A549 (cell line): ENCODE measurements at regions of chr1 and their contacts with region 1.

Region 1: DNA sequence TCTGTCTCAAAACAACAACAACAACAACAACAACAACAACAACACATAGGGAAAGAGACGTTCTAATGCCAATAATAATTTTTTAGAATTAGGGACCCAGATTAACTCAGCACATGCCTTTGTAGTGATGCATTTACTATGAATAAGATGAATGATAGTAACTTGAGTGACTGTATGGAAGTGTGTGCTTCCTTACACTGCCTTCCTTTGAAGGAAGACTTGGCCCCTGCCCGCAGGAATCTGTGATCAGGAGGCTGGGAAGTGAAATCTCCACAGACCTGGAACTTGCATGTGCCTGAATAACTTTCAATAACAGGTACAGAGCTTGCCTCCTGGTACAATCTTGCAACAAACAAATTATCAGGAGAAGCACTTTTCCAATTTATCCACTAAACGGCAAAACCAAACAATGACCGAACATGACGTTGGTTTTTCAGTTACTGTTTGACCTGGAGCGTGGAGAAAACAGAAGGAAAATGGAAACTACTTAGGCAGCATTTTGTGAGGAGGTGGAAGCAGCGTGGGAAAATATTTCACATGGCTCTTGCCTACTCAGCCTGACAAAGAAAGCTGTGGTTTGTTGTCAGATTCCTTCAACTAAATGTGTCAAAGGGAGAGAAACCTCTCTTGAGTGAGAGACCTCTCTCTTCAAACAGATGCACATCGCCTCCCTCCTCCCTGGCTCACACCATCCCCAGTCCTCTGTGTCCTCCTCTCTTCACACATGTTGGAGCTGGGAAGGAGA is 10.1 kb upstream of the ABCA4 start:
- DNase-seq: no peak
- ATAC-seq: no peak
- H3K4me3 ChIP-seq: no peak overlapping the region
- H3K27ac ChIP-seq: no peak overlapping the region
- H3K4me1 ChIP-seq: peaks cover 3% of the 10 kb centered on the region
- CTCF ChIP-seq: no peak
- EP300 ChIP-seq: no peak
- POLR2A ChIP-seq: no peak
- RAD21 ChIP-seq: no peak

Region 2: GRCh38 chr1:94118021-94118870 is 12.8 kb before region 1 on chr1:
- CTCF ChIA-PET with region 1: interaction called, 10 read pairs
- POLR2A ChIA-PET with region 1: no interaction called
- DNase-seq: peak in 1 of 2 experiments; percentile 28
- ATAC-seq: no peak; a peak in 1 of 6 replicates
- H3K4me3 ChIP-seq: no peak overlapping the region
- H3K27ac ChIP-seq: peak overlapping the region in 1 of 2 experiments; percentile 49; a peak in 3 of 6 replicates
- H3K4me1 ChIP-seq: peaks cover 19% of the 10 kb centered on the region; the same call in 2 of the 3 replicates
- CTCF ChIP-seq: no peak
- EP300 ChIP-seq: no peak
- POLR2A ChIP-seq: no peak
- RAD21 ChIP-seq: no peak

Region 3: GRCh38 chr1:94142022-94142421 is 11.0 kb after region 1 on chr1:
- CTCF ChIA-PET with region 1: no interaction called
- POLR2A ChIA-PET with region 1: no interaction called
- DNase-seq: no peak
- ATAC-seq: no peak
- H3K4me3 ChIP-seq: no peak overlapping the region
- H3K27ac ChIP-seq: peak overlapping the region in 1 of 2 experiments; percentile 17; a peak in 1 of 6 replicates
- H3K4me1 ChIP-seq: peaks cover 25% of the 10 kb centered on the region
- CTCF ChIP-seq: no peak
- EP300 ChIP-seq: no peak
- POLR2A ChIP-seq: no peak
- RAD21 ChIP-seq: no peak